ENCODE measurements at regions of chr6 and their contacts with region 1.

Region 1: GRCh38 chr6:150788089-150788488 is 77.4 kb upstream of the MTHFD1L start:
- DNase-seq: peak; percentile 70
- H3K4me3 ChIP-seq: no peak overlapping the region
- H3K27ac ChIP-seq: peak overlapping the region; percentile 30
- H3K4me1 ChIP-seq: peaks cover 13% of the 10 kb centered on the region
- CTCF ChIP-seq: no peak

Region 2: DNA sequence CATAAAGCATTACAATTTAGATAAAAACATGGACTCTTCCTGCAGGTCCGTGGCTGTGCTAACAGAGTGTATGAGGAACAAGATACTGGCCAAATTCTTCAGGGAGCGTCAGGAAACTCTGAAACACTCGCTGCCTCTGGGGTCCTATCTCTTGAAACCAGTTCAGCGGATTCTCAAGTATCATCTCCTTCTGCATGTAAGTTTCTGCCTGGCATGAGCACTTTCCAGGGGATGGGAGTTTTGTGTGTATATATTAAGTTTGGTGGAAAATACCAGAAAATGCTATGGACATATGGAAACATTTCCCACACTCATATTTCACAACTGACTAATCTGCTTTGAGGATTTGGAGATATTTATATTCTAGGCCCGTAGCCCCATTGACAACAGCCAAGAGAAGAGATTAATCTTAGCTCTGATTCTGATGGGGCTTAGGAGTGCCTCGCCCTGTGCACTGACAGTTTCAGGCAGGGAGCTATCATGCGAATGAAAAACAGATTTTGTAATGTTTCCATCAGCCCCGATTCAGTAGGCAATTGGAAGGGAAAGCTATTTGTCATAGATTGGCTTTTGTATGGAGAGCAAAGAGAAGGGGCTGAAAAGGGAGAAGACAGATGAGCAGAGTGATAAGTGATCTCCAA is 12.7 kb after region 1 on chr6:
- CTCF ChIA-PET with region 1: no interaction called
- POLR2A ChIA-PET with region 1: interaction called, 10 read pairs
- intact Hi-C with region 1: no loop called
- DNase-seq: no peak
- H3K4me3 ChIP-seq: no peak overlapping the region
- H3K27ac ChIP-seq: no peak overlapping the region
- H3K4me1 ChIP-seq: no peaks in the 10 kb centered on the region
- CTCF ChIP-seq: no peak

Region 3: DNA sequence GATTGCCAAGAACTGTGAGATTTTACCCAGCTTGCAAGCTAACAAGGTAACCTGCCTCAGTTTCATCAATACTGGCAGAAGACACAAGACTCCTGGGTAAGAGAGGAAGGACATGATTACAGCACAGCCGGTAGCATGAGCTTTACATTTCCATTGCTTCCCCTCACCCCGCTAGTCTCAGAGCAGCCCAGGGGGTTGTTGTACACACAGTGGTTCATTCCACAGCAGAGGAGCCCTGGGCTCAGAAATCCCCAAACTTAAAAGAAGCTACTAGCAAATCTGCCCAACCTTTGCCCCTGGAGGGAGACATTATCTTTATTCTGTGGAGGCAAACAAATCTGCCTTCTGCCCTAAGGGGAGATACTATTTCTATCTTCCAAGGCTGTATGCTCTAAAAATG is 60.3 kb after region 1 on chr6:
- CTCF ChIA-PET with region 1: no interaction called
- POLR2A ChIA-PET with region 1: no interaction called
- intact Hi-C with region 1: loop called (anchors 10 kb)
- DNase-seq: no peak
- H3K4me3 ChIP-seq: no peak overlapping the region
- H3K27ac ChIP-seq: no peak overlapping the region
- H3K4me1 ChIP-seq: no peaks in the 10 kb centered on the region
- CTCF ChIP-seq: no peak

Region 4: DNA sequence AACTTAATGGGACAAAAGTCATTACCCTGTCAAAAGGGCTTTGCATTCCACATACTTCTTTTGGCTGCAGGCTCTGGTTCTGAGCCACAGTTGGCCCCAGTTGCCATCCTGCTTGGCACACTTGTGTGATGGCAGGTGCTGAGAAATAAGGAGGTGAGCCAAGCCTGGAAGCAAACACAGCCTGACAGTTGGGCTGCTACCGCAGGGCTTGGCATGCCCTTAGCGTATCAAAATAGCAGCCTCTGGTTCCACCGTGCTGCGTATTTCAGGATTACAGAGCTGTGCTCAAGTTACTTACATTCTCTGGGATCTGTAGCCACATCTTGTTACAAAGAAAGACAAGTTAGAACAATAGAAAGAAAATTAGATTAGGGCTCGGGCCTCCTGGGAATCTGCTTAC is 88.5 kb after region 1 on chr6:
- CTCF ChIA-PET with region 1: no interaction called
- POLR2A ChIA-PET with region 1: no interaction called
- intact Hi-C with region 1: no loop called
- DNase-seq: no peak
- H3K4me3 ChIP-seq: no peak overlapping the region
- H3K27ac ChIP-seq: no peak overlapping the region
- H3K4me1 ChIP-seq: no peaks in the 10 kb centered on the region
- CTCF ChIP-seq: no peak

Measured in OCI-LY7 (cell line).